ENCODE measurements at regions of chr5 and their contacts with region 1.

Region 1: GRCh38 chr5:55923177-55923771 is 71.5 kb downstream of the IL6ST start:
- DNase-seq: no peak
- ATAC-seq: peak; percentile 79
- H3K4me3 ChIP-seq: peak overlapping the region; percentile 23 to 62
- H3K27ac ChIP-seq: peak overlapping the region; percentile 34; the same call in 1 of the 2 replicates
- H3K4me1 ChIP-seq: peaks cover 3% of the 10 kb centered on the region; the same call in 1 of the 2 replicates
- H3K27me3 ChIP-seq: no peaks in the 10 kb centered on the region
- CTCF ChIP-seq: no peak

Region 2: GRCh38 chr5:55711968-55712859 is 211.1 kb before region 1 on chr5 and contains the start of gene SLC38A9:
- CTCF ChIA-PET with region 1: no interaction called
- POLR2A ChIA-PET with region 1: no interaction called
- in situ Hi-C with region 1: no loop called
- intact Hi-C with region 1: loop called (anchors 10 kb)
- DNase-seq: peak; percentile 73
- ATAC-seq: peak; percentile 100
- H3K4me3 ChIP-seq: peak within 1 kb of the TSS; percentile 94 to 95
- H3K27ac ChIP-seq: peak within 1 kb of the TSS; percentile 80
- H3K4me1 ChIP-seq: no peaks in the 10 kb centered on the region
- H3K27me3 ChIP-seq: no peaks in the 10 kb centered on the region
- CTCF ChIP-seq: no peak
- total RNA-seq, gene SLC38A9: 12.8 TPM

Region 3: DNA sequence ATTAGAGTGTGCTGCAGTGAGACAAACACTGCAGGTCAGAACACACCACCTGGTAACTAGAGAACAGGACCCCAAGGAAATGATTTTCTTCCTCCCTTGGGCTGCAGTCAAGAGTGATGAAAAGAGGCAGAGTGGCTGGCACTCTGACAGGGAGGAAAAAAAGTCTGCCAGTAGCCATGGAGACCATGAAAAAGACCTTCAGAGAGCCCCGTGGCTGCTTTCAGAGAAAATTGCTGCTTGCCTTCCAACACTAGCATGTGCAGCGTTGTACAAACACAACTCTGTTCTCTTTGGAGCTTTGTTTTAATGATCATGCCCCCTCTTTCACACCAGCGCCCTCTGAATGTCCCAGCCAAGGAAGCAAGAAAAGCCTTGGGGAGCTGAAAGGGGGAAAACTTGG is 241.1 kb after region 1 on chr5:
- CTCF ChIA-PET with region 1: no interaction called
- POLR2A ChIA-PET with region 1: no interaction called
- in situ Hi-C with region 1: no loop called
- intact Hi-C with region 1: no loop called
- DNase-seq: no peak
- ATAC-seq: no peak
- H3K4me3 ChIP-seq: no peak overlapping the region
- H3K27ac ChIP-seq: no peak overlapping the region
- H3K4me1 ChIP-seq: no peaks in the 10 kb centered on the region
- H3K27me3 ChIP-seq: no peaks in the 10 kb centered on the region
- CTCF ChIP-seq: no peak

Measured in Panc1 (cell line).